Endothelial cell of umbilical vein (primary cell): ENCODE measurements at regions of chr17 and their contacts with region 1.

Region 1: DNA sequence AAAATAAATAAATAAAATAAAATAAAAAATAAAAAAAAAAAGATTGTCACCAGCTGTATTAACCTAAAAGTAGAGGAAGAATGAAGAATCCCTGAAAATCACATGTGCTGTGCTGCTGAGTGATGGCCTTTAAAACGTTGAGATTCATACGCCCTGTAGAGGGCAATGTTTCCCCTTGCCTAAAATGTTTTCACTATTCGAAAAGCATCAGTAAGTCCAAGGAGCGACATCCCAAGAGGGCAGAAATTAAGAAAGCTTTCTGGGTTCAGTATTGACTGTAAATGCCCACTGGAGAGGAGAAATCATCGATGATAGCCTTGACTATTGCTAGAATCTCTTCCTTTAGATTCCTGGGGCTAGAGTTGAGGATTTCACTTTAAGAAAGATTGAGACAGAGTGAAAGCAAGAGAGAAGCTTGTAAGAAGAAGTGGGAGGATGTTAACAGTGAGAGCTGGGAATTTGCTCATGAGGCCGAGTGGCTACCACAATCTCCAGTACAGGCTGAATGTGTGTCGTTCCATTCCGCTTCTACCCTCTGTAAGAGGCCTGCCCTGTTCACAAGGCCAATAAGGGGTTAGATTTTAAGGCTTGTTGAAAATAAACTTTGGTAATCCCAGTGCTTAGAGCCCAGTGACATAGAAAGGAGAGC is 170.8 kb upstream of the FAM20A start:
- DNase-seq: peak; percentile 82
- H3K4me3 ChIP-seq: no peak overlapping the region
- H3K27ac ChIP-seq: no peak overlapping the region
- H3K4me1 ChIP-seq: peaks cover 23% of the 10 kb centered on the region
- H3K27me3 ChIP-seq: no peaks in the 10 kb centered on the region
- CTCF ChIP-seq: peak; percentile 51 to 59
- POLR2A ChIP-seq: no peak

Region 2: GRCh38 chr17:68482576-68483041 is 289.4 kb before region 1 on chr17:
- CTCF ChIA-PET with region 1: no interaction called
- POLR2A ChIA-PET with region 1: no interaction called
- dilution Hi-C with region 1: no loop called
- intact Hi-C with region 1: no loop called
- DNase-seq: no peak
- H3K4me3 ChIP-seq: no peak overlapping the region
- H3K27ac ChIP-seq: no peak overlapping the region
- H3K4me1 ChIP-seq: no peaks in the 10 kb centered on the region
- H3K27me3 ChIP-seq: peaks cover 18 to 31% of the 10 kb centered on the region in 2 experiments
- CTCF ChIP-seq: no peak
- POLR2A ChIP-seq: no peak

Region 3: GRCh38 chr17:68748401-68748800 is 23.6 kb before region 1 on chr17:
- CTCF ChIA-PET with region 1: no interaction called
- POLR2A ChIA-PET with region 1: no interaction called
- dilution Hi-C with region 1: no loop called
- intact Hi-C with region 1: no loop called
- DNase-seq: no peak
- H3K4me3 ChIP-seq: no peak overlapping the region
- H3K27ac ChIP-seq: no peak overlapping the region
- H3K4me1 ChIP-seq: no peaks in the 10 kb centered on the region
- H3K27me3 ChIP-seq: no peaks in the 10 kb centered on the region
- CTCF ChIP-seq: no peak
- POLR2A ChIP-seq: no peak

Region 4: DNA sequence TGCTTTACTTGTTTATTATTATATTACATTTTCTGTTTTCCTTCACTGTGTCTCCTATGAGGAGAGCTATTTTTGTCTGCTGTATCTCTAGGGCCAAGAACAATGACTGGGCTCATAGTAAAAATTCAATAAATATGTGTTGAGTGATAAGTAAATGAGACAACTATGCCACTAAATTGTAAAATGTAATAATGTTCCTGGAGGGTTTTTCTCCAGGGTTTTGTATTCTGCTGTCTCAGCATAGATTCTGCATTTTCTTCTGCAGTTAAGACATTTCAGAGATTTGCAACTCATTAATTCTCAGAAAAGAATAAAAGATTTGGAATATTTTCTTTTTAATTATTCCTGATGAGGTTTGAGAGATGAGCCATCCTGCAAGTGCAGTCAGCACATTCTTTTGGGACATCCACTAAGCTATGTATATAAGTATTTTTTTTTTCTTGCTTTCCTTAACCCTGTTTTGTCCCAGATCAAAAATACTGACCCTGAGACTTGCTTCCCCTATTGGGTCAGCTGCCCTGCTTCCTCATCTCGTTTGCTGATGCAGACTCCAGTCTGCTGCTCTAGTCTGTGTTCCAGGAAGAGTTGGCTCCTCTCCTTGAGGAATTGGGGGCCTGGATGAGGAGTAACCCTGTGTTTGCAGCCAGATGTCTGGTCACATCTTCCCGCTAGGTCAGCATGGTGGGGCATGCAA is 60.3 kb after region 1 on chr17:
- CTCF ChIA-PET with region 1: no interaction called
- POLR2A ChIA-PET with region 1: no interaction called
- dilution Hi-C with region 1: no loop called
- intact Hi-C with region 1: no loop called
- DNase-seq: no peak
- H3K4me3 ChIP-seq: no peak overlapping the region
- H3K27ac ChIP-seq: no peak overlapping the region
- H3K4me1 ChIP-seq: peaks cover 4% of the 10 kb centered on the region
- H3K27me3 ChIP-seq: no peaks in the 10 kb centered on the region
- CTCF ChIP-seq: no peak
- POLR2A ChIP-seq: no peak

Region 5: DNA sequence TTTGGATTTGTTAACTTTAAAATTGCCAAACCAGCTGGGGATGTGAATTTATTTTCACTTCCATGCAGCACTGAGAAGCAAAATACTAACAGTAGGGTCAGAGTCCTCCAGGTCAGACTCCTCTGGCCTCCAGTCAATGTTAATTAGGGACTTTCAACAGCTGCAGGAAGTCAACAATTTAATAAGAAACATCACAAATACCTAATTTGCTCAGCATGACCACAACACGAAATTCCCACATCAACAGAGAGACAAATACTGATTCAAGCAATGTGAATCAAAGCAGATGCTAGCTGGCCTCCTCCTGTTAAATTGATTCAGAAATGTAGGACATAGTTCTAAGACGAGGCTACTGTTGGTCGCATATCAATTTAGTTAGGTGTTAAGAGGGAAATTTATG is 71.5 kb after region 1 on chr17:
- CTCF ChIA-PET with region 1: no interaction called
- POLR2A ChIA-PET with region 1: no interaction called
- dilution Hi-C with region 1: no loop called
- intact Hi-C with region 1: no loop called
- DNase-seq: no peak
- H3K4me3 ChIP-seq: no peak overlapping the region
- H3K27ac ChIP-seq: no peak overlapping the region
- H3K4me1 ChIP-seq: no peaks in the 10 kb centered on the region
- H3K27me3 ChIP-seq: no peaks in the 10 kb centered on the region
- CTCF ChIP-seq: no peak
- POLR2A ChIP-seq: no peak

Region 6: GRCh38 chr17:68972119-68972704 is 200.2 kb after region 1 on chr17:
- CTCF ChIA-PET with region 1: interaction called, 16 read pairs
- POLR2A ChIA-PET with region 1: no interaction called
- dilution Hi-C with region 1: no loop called
- intact Hi-C with region 1: loop called (anchors 1 kb)
- DNase-seq: peak; percentile 64
- H3K4me3 ChIP-seq: no peak overlapping the region
- H3K27ac ChIP-seq: no peak overlapping the region
- H3K4me1 ChIP-seq: no peaks in the 10 kb centered on the region
- H3K27me3 ChIP-seq: no peaks in the 10 kb centered on the region
- CTCF ChIP-seq: peak; percentile 50 to 58
- POLR2A ChIP-seq: no peak

Region 7: GRCh38 chr17:69223809-69224208 is 451.8 kb after region 1 on chr17:
- CTCF ChIA-PET with region 1: interaction called, 10 read pairs
- POLR2A ChIA-PET with region 1: no interaction called
- dilution Hi-C with region 1: no loop called
- intact Hi-C with region 1: no loop called
- DNase-seq: peak; percentile 22
- H3K4me3 ChIP-seq: no peak overlapping the region
- H3K27ac ChIP-seq: no peak overlapping the region
- H3K4me1 ChIP-seq: no peaks in the 10 kb centered on the region
- H3K27me3 ChIP-seq: no peaks in the 10 kb centered on the region
- CTCF ChIP-seq: no peak
- POLR2A ChIP-seq: no peak

Region 8: GRCh38 chr17:69235338-69235930 is 463.4 kb after region 1 on chr17:
- CTCF ChIA-PET with region 1: interaction called, 55 read pairs
- POLR2A ChIA-PET with region 1: no interaction called
- dilution Hi-C with region 1: no loop called
- intact Hi-C with region 1: loop called (anchors 1 kb)
- DNase-seq: peak; percentile 90
- H3K4me3 ChIP-seq: no peak overlapping the region
- H3K27ac ChIP-seq: peak overlapping the region; percentile 24
- H3K4me1 ChIP-seq: peaks cover 4% of the 10 kb centered on the region
- H3K27me3 ChIP-seq: no peaks in the 10 kb centered on the region
- CTCF ChIP-seq: peak; percentile 67 to 68
- POLR2A ChIP-seq: no peak

Region 9: GRCh38 chr17:69246726-69247375 is 474.9 kb after region 1 on chr17:
- CTCF ChIA-PET with region 1: interaction called, 72 read pairs
- POLR2A ChIA-PET with region 1: no interaction called
- dilution Hi-C with region 1: no loop called
- intact Hi-C with region 1: loop called (anchors 1 kb)
- DNase-seq: peak; percentile 69
- H3K4me3 ChIP-seq: no peak overlapping the region
- H3K27ac ChIP-seq: no peak overlapping the region
- H3K4me1 ChIP-seq: no peaks in the 10 kb centered on the region
- H3K27me3 ChIP-seq: no peaks in the 10 kb centered on the region
- CTCF ChIP-seq: peak in 1 of 2 donors; percentile 27
- POLR2A ChIP-seq: no peak

Region 10: GRCh38 chr17:69254187-69254586 is 482.2 kb after region 1 on chr17:
- CTCF ChIA-PET with region 1: interaction called, 39 read pairs
- POLR2A ChIA-PET with region 1: no interaction called
- dilution Hi-C with region 1: no loop called
- intact Hi-C with region 1: no loop called
- DNase-seq: no peak
- H3K4me3 ChIP-seq: no peak overlapping the region
- H3K27ac ChIP-seq: no peak overlapping the region
- H3K4me1 ChIP-seq: no peaks in the 10 kb centered on the region
- H3K27me3 ChIP-seq: no peaks in the 10 kb centered on the region
- CTCF ChIP-seq: no peak
- POLR2A ChIP-seq: no peak

Region 11: DNA sequence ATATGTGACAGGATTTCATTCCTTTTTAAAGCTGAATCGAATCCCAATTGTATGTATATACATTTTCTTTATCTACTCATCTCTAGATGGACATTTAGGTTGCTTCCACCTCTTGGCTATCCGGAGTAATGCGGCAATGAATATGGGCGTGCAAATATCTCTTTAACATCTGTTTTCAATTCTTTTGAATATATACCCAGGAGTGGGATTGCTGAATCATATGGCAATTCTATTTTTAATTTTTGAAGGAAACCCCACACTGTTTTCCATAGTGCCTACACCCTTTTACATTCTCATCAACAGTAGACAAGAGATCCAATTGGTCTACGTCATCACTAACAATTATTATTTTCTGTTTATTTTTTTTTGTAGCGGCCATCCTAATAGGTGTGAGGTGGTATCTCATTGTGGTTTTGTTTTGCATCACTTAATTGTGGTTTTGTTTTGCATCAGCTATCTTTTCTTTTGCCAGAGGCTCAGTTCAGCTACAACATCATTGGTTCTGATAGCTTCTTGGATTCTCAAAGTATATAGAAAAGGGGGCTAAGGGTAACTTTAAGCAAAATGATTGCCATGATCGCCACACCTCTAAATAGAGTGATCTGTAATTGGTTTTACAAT is 616.9 kb after region 1 on chr17:
- CTCF ChIA-PET with region 1: no interaction called
- POLR2A ChIA-PET with region 1: no interaction called
- dilution Hi-C with region 1: no loop called
- intact Hi-C with region 1: loop called (anchors 10 kb)
- DNase-seq: no peak
- H3K4me3 ChIP-seq: no peak overlapping the region
- H3K27ac ChIP-seq: no peak overlapping the region
- H3K4me1 ChIP-seq: no peaks in the 10 kb centered on the region
- H3K27me3 ChIP-seq: no peaks in the 10 kb centered on the region
- CTCF ChIP-seq: no peak
- POLR2A ChIP-seq: no peak